ENCODE measurements at regions of chr5 and their contacts with region 1.

Region 1: GRCh38 chr5:143979044-143979690 is 167.2 kb downstream of the HMHB1 start:
- DNase-seq: peak; percentile 12
- CTCF ChIP-seq: no peak

Region 2: DNA sequence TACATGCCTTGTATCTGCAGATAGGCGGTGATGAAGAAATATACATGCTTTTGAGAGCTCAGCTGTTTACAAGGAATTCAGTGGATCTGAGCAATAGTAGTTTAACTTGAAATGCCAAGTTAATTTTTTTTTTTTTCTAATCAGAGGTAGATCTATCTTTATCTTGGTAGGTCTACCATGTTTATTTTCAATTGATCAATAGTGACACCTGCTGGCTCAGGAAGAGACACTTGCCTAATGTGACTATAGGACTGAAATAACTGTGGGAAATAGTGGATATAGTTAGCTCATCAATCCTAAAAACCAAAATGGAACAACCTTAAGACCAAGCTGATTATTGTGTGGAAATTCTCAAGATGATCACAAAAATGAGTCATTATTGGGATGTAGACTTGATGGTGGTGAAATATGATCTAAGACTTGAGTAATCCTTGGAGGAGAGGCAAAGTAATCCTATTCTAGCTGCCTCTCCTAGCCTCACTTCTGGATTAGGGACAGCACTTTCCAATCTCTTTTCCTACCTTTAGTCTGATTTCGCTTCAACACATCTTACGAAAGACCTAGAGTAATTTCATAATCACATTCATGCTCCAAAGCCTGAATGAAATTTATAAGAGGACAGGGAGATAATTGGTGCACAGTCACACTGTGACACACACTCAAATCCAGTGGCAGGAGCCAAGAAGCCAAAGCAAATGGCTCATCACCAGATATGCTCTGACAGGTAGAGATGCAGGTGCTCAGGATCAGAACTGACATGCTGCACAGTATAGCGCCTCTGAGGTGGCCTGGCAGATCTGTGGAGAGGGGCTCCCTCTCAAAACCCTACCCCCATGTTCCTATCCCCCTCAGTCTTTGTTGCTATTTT is 10.9 kb before region 1 on chr5:
- CTCF ChIA-PET with region 1: interaction called, 35 read pairs
- POLR2A ChIA-PET with region 1: no interaction called
- DNase-seq: peak; percentile 37
- CTCF ChIP-seq: peak; percentile 56

Region 3: GRCh38 chr5:144015961-144016360 is 36.8 kb after region 1 on chr5:
- CTCF ChIA-PET with region 1: no interaction called
- POLR2A ChIA-PET with region 1: no interaction called
- DNase-seq: no peak
- CTCF ChIP-seq: no peak

Measured in GM10248 (cell line).